ENCODE measurements at regions of chr1 and their contacts with region 1.

Region 1: GRCh38 chr1:17475729-17476128 is 36.3 kb upstream of the RCC2 start:
- DNase-seq: no peak
- H3K4me3 ChIP-seq: no peak overlapping the region
- H3K27ac ChIP-seq: no peak overlapping the region
- H3K4me1 ChIP-seq: peaks cover 0 to 6% (median 0%) of the 10 kb centered on the region in 6 donors
- H3K27me3 ChIP-seq: peaks cover 0 to 27% (median 0%) of the 10 kb centered on the region in 7 donors
- CTCF ChIP-seq: no peak
- POLR2A ChIP-seq: no peak

Region 2: DNA sequence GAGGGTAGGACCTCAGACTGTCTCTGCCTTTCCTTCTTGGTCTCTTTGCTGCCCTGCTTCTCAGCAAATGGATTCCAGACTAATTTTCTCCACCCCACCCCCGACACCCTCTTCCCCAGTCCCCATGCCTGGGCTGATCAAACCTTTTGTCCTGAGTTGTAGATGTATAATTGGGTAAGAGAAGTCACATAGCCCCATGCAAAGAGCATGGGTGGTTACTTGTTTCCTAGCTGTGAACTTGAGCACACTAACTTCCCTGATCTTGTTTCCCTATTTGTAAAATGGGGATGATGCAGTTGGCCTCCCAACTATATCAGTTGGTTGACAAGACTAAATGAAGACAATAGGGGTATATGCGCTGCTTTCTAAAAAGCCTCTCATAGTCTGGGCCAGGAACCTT is 94.6 kb before region 1 on chr1:
- intact Hi-C with region 1: no loop called
- DNase-seq: no peak
- H3K4me3 ChIP-seq: no peak overlapping the region
- H3K27ac ChIP-seq: no peak overlapping the region
- H3K4me1 ChIP-seq: no peaks in the 10 kb centered on the region
- H3K27me3 ChIP-seq: peaks cover 0 to 47% (median 0%) of the 10 kb centered on the region in 7 donors
- CTCF ChIP-seq: no peak
- POLR2A ChIP-seq: no peak

Region 3: GRCh38 chr1:17419626-17420328 is 56.0 kb before region 1 on chr1:
- intact Hi-C with region 1: loop called (anchors 10 kb)
- DNase-seq: peak; percentile 92
- H3K4me3 ChIP-seq: no peak overlapping the region
- H3K27ac ChIP-seq: no peak overlapping the region
- H3K4me1 ChIP-seq: peaks cover 0 to 16% (median 6%) of the 10 kb centered on the region in 6 donors
- H3K27me3 ChIP-seq: no peaks in the 10 kb centered on the region
- CTCF ChIP-seq: peak; percentile 92 to 99 (median 98)
- POLR2A ChIP-seq: no peak

Region 4: GRCh38 chr1:17919525-17920439 is 444.1 kb after region 1 on chr1:
- intact Hi-C with region 1: no loop called
- DNase-seq: peak; percentile 41
- H3K4me3 ChIP-seq: no peak overlapping the region
- H3K27ac ChIP-seq: no peak overlapping the region
- H3K4me1 ChIP-seq: no peaks in the 10 kb centered on the region
- H3K27me3 ChIP-seq: peaks cover 0 to 99% (median 24%) of the 10 kb centered on the region in 7 donors
- CTCF ChIP-seq: peak in 2 of 11 experiments; percentile 15 to 18
- POLR2A ChIP-seq: no peak

Measured in spleen (tissue), 13 donors.